Left colon (tissue), 2 donors: ENCODE measurements at regions of chr9 and their contacts with region 1.

Region 1: DNA sequence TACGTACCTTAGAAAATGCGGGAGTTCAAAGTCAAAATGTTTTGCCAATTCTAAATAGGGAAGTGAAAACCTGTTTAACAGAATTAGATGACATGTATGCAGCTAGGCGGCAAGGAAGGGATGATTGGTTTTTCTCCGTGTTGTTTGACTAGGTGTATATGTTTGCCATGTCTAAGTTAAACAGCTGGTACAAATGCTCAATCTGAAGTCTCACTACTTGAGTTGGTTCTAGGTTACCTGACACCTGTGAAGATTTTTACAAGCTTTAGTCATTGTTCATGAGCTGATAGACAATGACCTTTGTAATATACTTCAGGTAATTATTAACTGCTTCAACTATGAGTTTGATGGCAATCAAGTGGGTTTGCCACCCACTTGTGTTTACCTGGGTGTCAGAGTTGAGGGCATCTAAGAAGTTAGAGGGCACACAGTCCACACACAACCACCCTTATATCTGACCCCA is 74.3 kb downstream of the SLC44A1 start:
- DNase-seq: peak in 1 of 2 donors; percentile 61
- ATAC-seq: peak; percentile 82

Region 2: DNA sequence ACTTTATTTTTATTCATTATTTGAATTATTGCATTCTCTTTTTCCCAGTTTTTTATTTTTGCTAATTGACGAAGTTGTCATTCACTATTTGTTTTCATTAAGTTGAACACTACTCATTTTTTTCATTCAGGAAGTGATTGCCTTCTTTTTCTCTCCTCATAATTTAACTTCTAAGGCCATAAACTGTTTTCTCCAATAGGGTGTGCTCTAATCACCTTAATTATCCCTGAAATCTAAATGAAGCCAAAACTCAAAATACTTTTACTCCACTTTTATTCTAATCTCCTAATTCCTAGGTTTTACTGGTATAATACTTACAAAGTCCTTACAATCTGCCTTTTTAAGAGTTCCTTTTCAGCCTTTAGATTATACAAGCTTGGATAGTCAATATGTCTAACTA is 710.4 kb before region 1 on chr9:
- intact Hi-C with region 1: no loop called
- DNase-seq: no peak
- ATAC-seq: no peak

Region 3: DNA sequence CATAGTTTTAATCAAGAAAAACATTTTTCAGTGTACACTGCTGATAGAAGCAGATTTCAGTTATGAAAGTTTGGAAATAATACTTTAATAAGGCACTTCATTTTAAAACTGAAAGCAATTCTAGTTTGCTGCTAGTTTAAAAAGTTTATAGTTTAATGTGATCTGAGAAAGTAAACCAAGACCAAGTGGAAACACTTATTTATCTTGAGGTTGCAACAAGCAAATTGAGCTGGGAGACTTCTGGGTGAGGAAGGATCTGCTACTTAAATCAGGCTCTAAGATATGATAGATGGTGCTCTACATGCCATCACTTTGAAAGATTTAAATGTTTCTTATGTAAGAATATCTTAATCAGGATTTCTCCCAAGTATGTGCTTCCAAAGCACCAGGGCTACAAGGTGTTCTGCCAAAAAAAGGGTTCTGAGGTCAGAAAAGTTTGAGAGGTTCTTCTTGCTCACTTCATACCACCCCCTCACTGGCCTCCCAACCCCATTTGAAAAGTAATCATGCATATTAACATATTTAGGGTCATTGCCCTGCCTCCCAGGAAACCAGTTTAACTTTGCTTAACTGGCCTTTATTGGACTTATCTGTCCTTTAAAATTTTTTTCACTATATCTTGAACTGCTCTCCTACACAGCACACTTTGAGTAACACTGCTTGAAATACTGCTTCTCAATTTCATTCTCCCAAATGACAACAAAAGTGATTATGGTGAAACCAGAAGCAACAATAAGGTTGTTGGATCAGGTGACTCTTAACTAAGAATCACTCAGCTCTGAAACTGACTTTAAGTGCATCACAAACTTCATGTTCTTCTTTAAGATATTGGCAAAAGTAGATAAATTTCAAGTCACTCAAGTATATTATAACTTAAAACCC is 58.8 kb before region 1 on chr9:
- intact Hi-C with region 1: loop called in 1 of 2 experiments (anchors 10 kb)
- DNase-seq: no peak
- ATAC-seq: no peak

Region 4: GRCh38 chr9:105270711-105271110 is 48.0 kb before region 1 on chr9:
- intact Hi-C with region 1: no loop called
- DNase-seq: no peak
- ATAC-seq: no peak